ENCODE measurements at regions of chr4 and their contacts with region 1.

Region 1: DNA sequence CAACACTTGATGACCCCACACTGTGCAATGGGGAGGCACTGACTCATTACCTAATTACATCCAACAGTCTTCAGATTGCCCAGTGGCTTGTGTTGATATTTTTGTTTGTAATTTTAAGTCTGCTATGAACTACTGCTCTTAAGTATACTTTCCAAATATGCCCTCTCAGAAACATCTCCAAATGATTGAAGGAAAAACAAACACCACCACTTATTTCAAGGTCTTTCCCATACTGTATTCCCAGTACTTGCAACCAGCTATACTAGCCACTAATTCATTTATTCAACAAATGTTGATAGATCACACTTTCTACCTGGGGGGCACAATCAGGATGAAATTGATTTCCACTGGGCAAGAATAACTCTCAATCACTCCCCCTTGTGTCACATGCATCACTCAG is 302.2 kb upstream of the CPEB2 start:
- DNase-seq: no peak
- H3K4me3 ChIP-seq: no peak overlapping the region
- H3K27ac ChIP-seq: no peak overlapping the region
- H3K4me1 ChIP-seq: no peaks in the 10 kb centered on the region
- H3K27me3 ChIP-seq: no peaks in the 10 kb centered on the region
- CTCF ChIP-seq: peak in 1 of 2 donors; percentile 4

Region 2: GRCh38 chr4:14726441-14727405 is 26.6 kb after region 1 on chr4:
- CTCF ChIA-PET with region 1: no interaction called
- dilution Hi-C with region 1: no loop called
- in situ Hi-C with region 1: no loop called
- intact Hi-C with region 1: loop called (anchors 1 kb)
- DNase-seq: peak; percentile 95
- H3K4me3 ChIP-seq: peak overlapping the region in 1 of 3 experiments; percentile 0
- H3K27ac ChIP-seq: peak overlapping the region; percentile 94
- H3K4me1 ChIP-seq: peaks cover 12% of the 10 kb centered on the region
- H3K27me3 ChIP-seq: no peaks in the 10 kb centered on the region
- CTCF ChIP-seq: no peak

Measured in mammary epithelial cell (primary cell).